ENCODE measurements at regions of chr17 and their contacts with region 1.

Region 1: GRCh38 chr17:752002-752619 is at the start of gene GEMIN4:
- DNase-seq: peak; percentile 97
- ATAC-seq: peak; percentile 88
- H3K4me3 Mint-ChIP-seq: peak within 1 kb of the TSS; percentile 95
- H3K27ac Mint-ChIP-seq: peak within 1 kb of the TSS; percentile 96
- H3K4me1 Mint-ChIP-seq: peaks cover 31% of the 10 kb centered on the region
- H3K27me3 Mint-ChIP-seq: no peaks in the 10 kb centered on the region
- total RNA-seq, gene GEMIN4: 41.4 to 45.8 TPM

Region 2: GRCh38 chr17:716238-716637 is 35.9 kb before region 1 on chr17:
- CTCF ChIA-PET with region 1: interaction called, 13 read pairs
- POLR2A ChIA-PET with region 1: interaction called, 4 read pairs
- DNase-seq: no peak
- ATAC-seq: no peak
- H3K4me3 Mint-ChIP-seq: no peak overlapping the region
- H3K27ac Mint-ChIP-seq: no peak overlapping the region
- H3K4me1 Mint-ChIP-seq: peaks cover 21% of the 10 kb centered on the region
- H3K27me3 Mint-ChIP-seq: no peaks in the 10 kb centered on the region

Region 3: GRCh38 chr17:781805-782731 is 30.0 kb after region 1 on chr17 and contains the starts of genes GLOD4 and MRM3:
- CTCF ChIA-PET with region 1: interaction called, 5 read pairs
- POLR2A ChIA-PET with region 1: interaction called, 17 read pairs
- DNase-seq: peak; percentile 94
- ATAC-seq: peak; percentile 94
- H3K4me3 Mint-ChIP-seq: peak within 1 kb of the TSS; percentile 96
- H3K27ac Mint-ChIP-seq: peak within 1 kb of the TSS; percentile 96
- H3K4me1 Mint-ChIP-seq: peaks cover 32% of the 10 kb centered on the region
- H3K27me3 Mint-ChIP-seq: no peaks in the 10 kb centered on the region
- total RNA-seq, gene GLOD4: 57.5 to 59.1 TPM
- total RNA-seq, gene MRM3: 19.4 to 19.6 TPM

Measured in activated CD8-positive, alpha-beta T cell treated with anti-CD3 and anti-CD28 coated beads, Interleukin-2, amount 10 ng/mL, durations not matched to agents 7 days and 5 days (primary cell).